ENCODE measurements at regions of chr17 and their contacts with region 1.

Region 1: DNA sequence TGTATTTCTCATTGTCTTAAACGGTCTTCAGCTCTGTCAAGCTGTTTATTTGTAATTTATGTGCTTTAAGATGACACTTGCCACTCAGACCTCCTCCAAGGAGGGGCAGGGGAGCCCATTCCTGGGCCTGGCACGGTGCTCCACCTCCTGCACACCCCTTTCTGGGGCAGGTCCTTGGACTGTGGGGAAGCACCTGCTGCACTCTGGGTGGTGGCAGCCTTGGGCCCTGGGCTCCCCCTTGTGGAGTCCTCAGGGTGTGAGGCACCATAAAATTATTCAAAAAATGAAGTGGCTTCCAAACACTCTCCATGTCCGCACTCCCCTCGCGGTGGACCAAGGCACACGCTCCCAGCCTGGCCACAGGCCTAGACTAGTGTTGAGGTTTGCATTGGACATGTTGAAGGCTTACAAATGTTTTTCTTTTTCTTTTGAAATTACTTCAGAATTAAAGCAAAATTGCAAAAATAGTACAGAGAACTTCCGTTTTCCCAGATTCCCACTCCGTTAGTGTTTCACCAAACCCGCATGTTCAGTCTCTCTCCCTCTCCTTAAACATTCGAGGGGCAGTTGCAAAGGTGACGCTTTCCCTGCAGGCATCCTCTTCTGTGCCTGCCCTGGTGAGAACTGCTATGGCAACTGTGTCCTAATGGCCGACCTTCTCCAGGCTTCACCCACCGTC is 32.4 kb downstream of the FOXK2 start:
- DNase-seq: peak; percentile 81
- H3K4me3 ChIP-seq: no peak overlapping the region
- H3K27ac ChIP-seq: no peak overlapping the region
- H3K4me1 ChIP-seq: no peaks in the 10 kb centered on the region
- H3K27me3 ChIP-seq: no peaks in the 10 kb centered on the region
- CTCF ChIP-seq: peak; percentile 73 to 82
- POLR2A ChIP-seq: no peak

Region 2: GRCh38 chr17:82292251-82293154 is 259.4 kb before region 1 on chr17:
- CTCF ChIA-PET with region 1: no interaction called
- POLR2A ChIA-PET with region 1: interaction called, 10 read pairs
- dilution Hi-C with region 1: no loop called
- intact Hi-C with region 1: no loop called
- DNase-seq: peak; percentile 97
- H3K4me3 ChIP-seq: peak overlapping the region; percentile 23 to 90 (median 51)
- H3K27ac ChIP-seq: peak overlapping the region; percentile 55
- H3K4me1 ChIP-seq: peaks cover 40% of the 10 kb centered on the region
- H3K27me3 ChIP-seq: no peaks in the 10 kb centered on the region
- CTCF ChIP-seq: no peak
- POLR2A ChIP-seq: peak; percentile 83

Region 3: GRCh38 chr17:82457997-82458864 is 93.7 kb before region 1 on chr17 and contains the start of gene NARF:
- CTCF ChIA-PET with region 1: no interaction called
- POLR2A ChIA-PET with region 1: no interaction called
- dilution Hi-C with region 1: no loop called
- intact Hi-C with region 1: loop called (anchors 2 kb)
- DNase-seq: peak; percentile 98
- H3K4me3 ChIP-seq: peak within 1 kb of the TSS; percentile 30 to 65 (median 57)
- H3K27ac ChIP-seq: peak within 1 kb of the TSS; percentile 96
- H3K4me1 ChIP-seq: peaks cover 11% of the 10 kb centered on the region
- H3K27me3 ChIP-seq: no peaks in the 10 kb centered on the region
- CTCF ChIP-seq: no peak
- POLR2A ChIP-seq: peak; percentile 85
- total RNA-seq, gene NARF: 83.4 and 85.6 TPM in 2 replicates

Region 4: GRCh38 chr17:82503094-82503727 is 48.7 kb before region 1 on chr17:
- CTCF ChIA-PET with region 1: interaction called, 10 read pairs
- POLR2A ChIA-PET with region 1: interaction called, 4 read pairs
- dilution Hi-C with region 1: no loop called
- intact Hi-C with region 1: no loop called
- DNase-seq: no peak
- H3K4me3 ChIP-seq: no peak overlapping the region
- H3K27ac ChIP-seq: no peak overlapping the region
- H3K4me1 ChIP-seq: no peaks in the 10 kb centered on the region
- H3K27me3 ChIP-seq: peaks cover 0 to 2% of the 10 kb centered on the region in 2 experiments
- CTCF ChIP-seq: no peak
- POLR2A ChIP-seq: no peak

Region 5: DNA sequence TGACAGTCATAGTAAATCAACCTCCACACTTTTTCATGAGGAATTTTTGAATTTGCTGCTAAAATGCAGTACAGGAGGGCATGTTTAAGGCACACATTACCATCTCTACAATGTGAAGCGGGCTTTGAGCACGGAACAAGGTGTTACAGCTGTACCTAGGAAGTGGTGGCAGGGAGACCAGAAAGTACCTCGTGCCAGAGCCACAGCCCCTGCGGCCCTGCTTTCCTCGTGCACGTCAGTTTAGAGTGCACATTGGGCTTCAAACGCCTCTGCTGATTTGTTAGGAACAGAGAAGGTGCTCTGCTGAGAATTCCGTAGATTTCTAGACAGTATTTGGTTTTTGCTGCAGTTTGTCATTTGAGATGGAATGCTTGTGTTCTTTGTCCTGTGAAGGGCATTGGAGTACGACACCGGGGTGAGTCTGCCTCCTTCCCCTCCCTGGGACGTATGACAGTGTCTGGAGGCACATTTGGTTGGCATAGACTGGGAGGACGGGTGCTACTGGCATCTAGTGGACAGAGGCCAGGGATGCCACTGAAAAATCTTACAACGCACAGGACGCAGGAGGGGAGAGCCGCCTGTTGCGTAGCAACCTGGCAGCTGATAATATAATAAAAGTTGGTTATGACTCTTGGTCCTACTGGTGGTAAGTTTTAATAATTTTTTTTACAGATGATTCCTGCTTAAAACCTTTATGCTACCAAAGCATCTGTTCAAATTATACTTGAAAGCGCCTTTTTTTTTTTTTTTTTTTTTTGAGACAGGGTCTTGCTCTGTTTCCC is 23.2 kb before region 1 on chr17:
- CTCF ChIA-PET with region 1: interaction called, 17 read pairs
- POLR2A ChIA-PET with region 1: interaction called, 4 read pairs
- dilution Hi-C with region 1: no loop called
- intact Hi-C with region 1: no loop called
- DNase-seq: peak; percentile 73
- H3K4me3 ChIP-seq: no peak overlapping the region
- H3K27ac ChIP-seq: no peak overlapping the region
- H3K4me1 ChIP-seq: peaks cover 15% of the 10 kb centered on the region
- H3K27me3 ChIP-seq: no peaks in the 10 kb centered on the region
- CTCF ChIP-seq: peak; percentile 41 to 50
- POLR2A ChIP-seq: no peak

Measured in endothelial cell of umbilical vein (primary cell).